ENCODE measurements at regions of chr1 and their contacts with region 1.

Region 1: GRCh38 chr1:9626201-9626608 is 25.3 kb upstream of the PIK3CD start:
- DNase-seq: no peak
- ATAC-seq: peak in 1 of 2 experiments; percentile 4; a peak in 2 of 6 replicates
- H3K4me3 ChIP-seq: peak overlapping the region; percentile 53
- H3K27ac ChIP-seq: peak overlapping the region in 1 of 2 experiments; percentile 70; a peak in 4 of 6 replicates
- H3K4me1 ChIP-seq: no peaks in the 10 kb centered on the region
- CTCF ChIP-seq: no peak
- EP300 ChIP-seq: no peak
- POLR2A ChIP-seq: no peak
- RAD21 ChIP-seq: no peak

Region 2: DNA sequence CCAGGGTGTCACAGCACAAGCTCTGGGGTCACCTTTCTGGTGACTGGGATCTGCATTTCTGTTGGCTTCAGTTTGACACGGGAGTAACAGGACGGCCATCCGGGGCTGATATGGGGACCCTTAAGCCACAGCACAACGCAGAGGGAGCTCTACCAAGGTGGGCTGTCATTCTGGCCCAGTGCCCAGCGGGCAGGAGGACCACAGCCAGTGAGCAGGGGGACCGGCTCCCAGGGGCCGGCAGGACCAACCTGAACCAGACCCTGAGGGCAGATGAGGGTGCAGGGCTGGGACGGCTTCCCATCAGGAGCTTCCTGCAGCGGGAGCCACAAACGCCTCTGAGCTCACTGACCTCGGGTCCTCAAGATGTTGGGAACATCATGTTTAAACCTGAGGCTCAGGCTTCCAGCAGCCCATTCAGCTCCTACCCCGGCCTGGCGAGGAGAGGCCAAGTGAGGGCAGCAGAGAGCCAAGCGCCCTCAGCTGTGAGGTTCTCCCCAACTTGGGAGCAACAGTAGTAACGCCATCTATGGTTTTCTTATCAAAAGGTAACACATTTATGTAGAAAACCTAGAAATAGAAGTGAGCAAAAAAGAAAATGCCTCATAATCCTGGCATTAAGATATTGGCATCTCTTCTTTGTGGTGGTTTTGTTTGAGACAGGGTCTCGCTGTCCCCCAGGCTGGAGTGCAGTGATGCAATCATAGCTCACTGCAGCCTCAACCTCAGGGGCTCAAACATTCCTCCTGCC is 10.7 kb before region 1 on chr1:
- CTCF ChIA-PET with region 1: interaction called, 23 read pairs
- POLR2A ChIA-PET with region 1: no interaction called
- DNase-seq: peak; percentile 47 to 65
- ATAC-seq: peak; percentile 91 to 93
- H3K4me3 ChIP-seq: no peak overlapping the region
- H3K27ac ChIP-seq: no peak overlapping the region
- H3K4me1 ChIP-seq: no peaks in the 10 kb centered on the region
- CTCF ChIP-seq: peak; percentile 53
- EP300 ChIP-seq: no peak
- POLR2A ChIP-seq: no peak
- RAD21 ChIP-seq: peak; percentile 34 to 53; a peak in 4 of 5 replicates

Region 3: GRCh38 chr1:9676815-9677393 is 50.7 kb after region 1 on chr1:
- CTCF ChIA-PET with region 1: interaction called, 11 read pairs
- POLR2A ChIA-PET with region 1: no interaction called
- DNase-seq: no peak
- ATAC-seq: peak; percentile 24 to 30; a peak in 1 of 6 replicates
- H3K4me3 ChIP-seq: no peak overlapping the region
- H3K27ac ChIP-seq: no peak overlapping the region
- H3K4me1 ChIP-seq: peaks cover 1% of the 10 kb centered on the region; the same call in 1 of the 3 replicates
- CTCF ChIP-seq: no peak
- EP300 ChIP-seq: no peak
- POLR2A ChIP-seq: no peak
- RAD21 ChIP-seq: no peak

Region 4: DNA sequence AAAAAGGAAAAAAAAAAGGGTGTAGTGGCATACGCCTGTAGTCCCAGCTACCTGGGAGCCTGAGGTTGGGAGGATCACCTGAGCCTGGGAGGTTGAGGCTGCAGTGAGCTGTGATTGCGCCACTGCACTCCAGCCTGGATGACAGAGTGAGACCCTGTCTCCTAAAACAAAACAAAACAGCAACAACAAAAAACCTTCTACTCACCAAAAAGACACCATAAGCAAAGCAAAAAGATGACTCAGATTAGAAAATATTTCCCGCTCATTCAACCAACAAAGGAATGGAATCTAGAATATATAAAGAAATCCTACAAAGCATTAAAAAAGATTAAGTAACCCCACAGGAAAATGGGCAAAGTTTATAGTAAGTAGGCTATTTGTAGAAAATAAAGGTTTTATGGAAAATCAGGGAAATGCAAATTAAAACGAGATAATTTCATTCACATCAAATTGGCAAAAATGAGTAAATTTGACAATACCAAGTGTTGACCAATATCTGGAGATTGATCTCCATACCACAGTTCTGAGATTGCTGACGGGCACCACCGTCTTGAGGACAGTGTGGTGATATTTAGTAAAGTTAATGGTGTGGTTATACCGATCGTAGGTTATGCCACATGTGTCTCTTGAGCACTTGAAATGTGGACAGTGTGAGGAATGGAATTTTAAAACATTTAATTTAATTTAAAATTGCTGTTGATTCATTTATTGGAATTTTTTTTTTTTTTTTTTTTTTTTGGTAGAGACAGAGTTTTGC is 79.3 kb after region 1 on chr1:
- CTCF ChIA-PET with region 1: interaction called, 15 read pairs
- POLR2A ChIA-PET with region 1: no interaction called
- DNase-seq: no peak
- ATAC-seq: no peak
- H3K4me3 ChIP-seq: no peak overlapping the region
- H3K27ac ChIP-seq: no peak overlapping the region
- H3K4me1 ChIP-seq: peaks cover 7% of the 10 kb centered on the region
- CTCF ChIP-seq: no peak
- EP300 ChIP-seq: no peak
- POLR2A ChIP-seq: no peak
- RAD21 ChIP-seq: no peak

Region 5: GRCh38 chr1:9724706-9725476 is 98.7 kb after region 1 on chr1:
- CTCF ChIA-PET with region 1: interaction called, 28 read pairs
- POLR2A ChIA-PET with region 1: no interaction called
- DNase-seq: peak; percentile 57 to 67
- ATAC-seq: peak; percentile 80 to 88
- H3K4me3 ChIP-seq: no peak overlapping the region
- H3K27ac ChIP-seq: peak overlapping the region in 1 of 2 experiments; percentile 36; a peak in 1 of 6 replicates
- H3K4me1 ChIP-seq: peaks cover 2% of the 10 kb centered on the region
- CTCF ChIP-seq: peak; percentile 55
- EP300 ChIP-seq: no peak
- POLR2A ChIP-seq: no peak
- RAD21 ChIP-seq: peak; percentile 42 to 61

Region 6: DNA sequence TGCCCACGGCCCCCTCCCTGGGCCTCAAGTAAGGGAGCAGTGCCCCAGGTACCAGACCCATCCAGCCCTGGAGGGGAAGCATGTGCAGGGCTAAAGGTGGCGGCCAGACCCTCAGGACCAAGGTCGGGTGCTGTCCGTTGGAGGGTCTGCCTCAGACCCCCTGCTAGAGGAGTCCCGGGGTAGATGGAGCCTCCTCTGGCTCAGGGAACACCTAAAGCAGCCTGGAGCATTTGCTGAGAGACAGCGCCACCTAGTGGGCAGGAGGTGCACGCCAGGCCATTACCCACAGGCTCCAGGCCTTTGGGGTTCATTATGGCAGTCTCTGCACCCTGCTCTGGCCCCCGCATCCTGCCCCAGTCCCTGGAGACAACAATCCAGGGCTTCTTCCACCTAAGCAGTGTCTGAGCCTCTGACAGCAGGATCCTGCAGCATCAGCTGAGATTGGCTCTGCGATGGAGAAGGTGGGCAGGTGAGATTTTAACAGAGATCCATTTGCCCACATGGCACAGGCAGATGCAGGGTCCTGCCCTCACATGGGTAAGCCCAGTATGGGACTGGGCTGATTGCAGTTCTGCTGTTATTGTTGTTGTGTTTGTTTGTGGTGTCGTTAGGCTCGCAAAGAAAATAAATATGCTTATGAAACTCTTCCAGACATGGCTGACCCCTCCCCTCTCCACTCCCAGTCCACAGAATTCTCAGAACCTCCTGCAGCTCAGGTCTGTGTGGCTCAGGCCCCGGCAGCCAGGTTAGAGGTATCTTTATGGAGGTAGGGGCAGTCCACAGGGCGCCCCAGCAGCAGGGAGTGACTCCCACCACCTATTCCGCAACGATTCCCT is 241.4 kb after region 1 on chr1:
- CTCF ChIA-PET with region 1: interaction called, 32 read pairs
- POLR2A ChIA-PET with region 1: no interaction called
- DNase-seq: peak; percentile 57 to 72
- ATAC-seq: peak; percentile 92 to 97
- H3K4me3 ChIP-seq: no peak overlapping the region
- H3K27ac ChIP-seq: 0 out of 6 replicates have a peak overlapping the region, but pooled peaks of 1 of the 2 experiments have one; percentile 32
- H3K4me1 ChIP-seq: no peaks in the 10 kb centered on the region
- CTCF ChIP-seq: peak; percentile 81
- EP300 ChIP-seq: no peak
- POLR2A ChIP-seq: no peak
- RAD21 ChIP-seq: peak; percentile 94 to 97